Caco-2 (cell line): ENCODE measurements at regions of chr7 and their contacts with region 1.

Region 1: DNA sequence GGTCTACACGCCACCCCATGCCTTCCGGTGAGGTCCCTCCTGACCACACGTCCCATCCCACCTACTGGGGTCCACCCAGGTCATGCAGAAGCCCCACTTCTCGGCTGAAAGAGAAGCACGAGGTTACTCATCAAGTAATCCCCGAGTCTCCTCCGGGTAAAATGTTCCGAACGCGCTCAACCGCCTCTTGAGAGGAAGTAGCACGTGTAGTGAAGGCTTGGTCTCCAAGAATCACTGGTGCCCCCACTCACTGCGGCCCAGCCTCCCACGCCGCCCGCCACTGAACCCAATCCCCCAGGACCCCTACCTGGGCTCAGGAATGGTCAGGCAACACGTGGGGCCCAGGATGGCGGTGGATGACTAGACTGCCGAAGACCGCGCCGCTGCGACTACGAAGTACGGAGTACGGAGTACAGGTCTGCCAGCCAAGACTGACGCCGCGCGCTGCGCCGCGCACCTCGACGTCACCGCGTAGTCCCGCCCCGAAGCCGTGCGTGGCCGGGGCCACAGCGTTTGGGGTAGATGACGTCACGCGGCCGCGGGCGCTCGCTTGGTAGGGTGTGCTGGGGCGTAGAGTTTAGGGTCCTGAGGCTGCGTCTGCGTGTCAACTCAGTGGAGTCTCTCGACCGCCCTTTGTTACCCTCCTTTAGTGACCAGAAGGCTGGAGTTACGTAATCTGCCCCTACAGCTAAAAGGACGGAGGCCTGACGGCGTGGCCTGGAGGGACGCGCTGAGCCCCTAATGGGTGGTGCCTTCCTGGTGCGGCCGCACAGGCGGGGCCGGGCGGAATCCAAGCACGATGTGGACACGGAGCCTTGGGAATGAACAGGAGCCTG is 7.6 kb upstream of the MYO1G start:
- DNase-seq: peak; percentile 97
- H3K4me3 ChIP-seq: peak overlapping the region; percentile 80
- H3K4me3 Mint-ChIP-seq: peak overlapping the region; percentile 97
- H3K27ac Mint-ChIP-seq: peak overlapping the region; percentile 100
- H3K4me1 ChIP-seq: peaks cover 11% of the 10 kb centered on the region
- H3K4me1 Mint-ChIP-seq: peaks cover 17% of the 10 kb centered on the region
- H3K27me3 ChIP-seq: no peaks in the 10 kb centered on the region
- H3K27me3 Mint-ChIP-seq: no peaks in the 10 kb centered on the region
- CTCF ChIP-seq: no peak

Region 2: GRCh38 chr7:44581879-44582603 is 404.4 kb before region 1 on chr7 and contains the start of gene TMED4:
- CTCF ChIA-PET with region 1: no interaction called
- POLR2A ChIA-PET with region 1: no interaction called
- intact Hi-C with region 1: loop called (anchors 10 kb)
- DNase-seq: peak; percentile 99 to 100
- H3K4me3 ChIP-seq: peak within 1 kb of the TSS; percentile 80
- H3K4me3 Mint-ChIP-seq: peak within 1 kb of the TSS; percentile 86
- H3K27ac Mint-ChIP-seq: peak within 1 kb of the TSS; percentile 96
- H3K4me1 ChIP-seq: peaks cover 13% of the 10 kb centered on the region
- H3K4me1 Mint-ChIP-seq: peaks cover 7% of the 10 kb centered on the region
- H3K27me3 ChIP-seq: no peaks in the 10 kb centered on the region
- H3K27me3 Mint-ChIP-seq: no peaks in the 10 kb centered on the region
- CTCF ChIP-seq: no peak
- total RNA-seq, gene TMED4: 93.4 and 96.6 TPM in 2 replicates

Region 3: DNA sequence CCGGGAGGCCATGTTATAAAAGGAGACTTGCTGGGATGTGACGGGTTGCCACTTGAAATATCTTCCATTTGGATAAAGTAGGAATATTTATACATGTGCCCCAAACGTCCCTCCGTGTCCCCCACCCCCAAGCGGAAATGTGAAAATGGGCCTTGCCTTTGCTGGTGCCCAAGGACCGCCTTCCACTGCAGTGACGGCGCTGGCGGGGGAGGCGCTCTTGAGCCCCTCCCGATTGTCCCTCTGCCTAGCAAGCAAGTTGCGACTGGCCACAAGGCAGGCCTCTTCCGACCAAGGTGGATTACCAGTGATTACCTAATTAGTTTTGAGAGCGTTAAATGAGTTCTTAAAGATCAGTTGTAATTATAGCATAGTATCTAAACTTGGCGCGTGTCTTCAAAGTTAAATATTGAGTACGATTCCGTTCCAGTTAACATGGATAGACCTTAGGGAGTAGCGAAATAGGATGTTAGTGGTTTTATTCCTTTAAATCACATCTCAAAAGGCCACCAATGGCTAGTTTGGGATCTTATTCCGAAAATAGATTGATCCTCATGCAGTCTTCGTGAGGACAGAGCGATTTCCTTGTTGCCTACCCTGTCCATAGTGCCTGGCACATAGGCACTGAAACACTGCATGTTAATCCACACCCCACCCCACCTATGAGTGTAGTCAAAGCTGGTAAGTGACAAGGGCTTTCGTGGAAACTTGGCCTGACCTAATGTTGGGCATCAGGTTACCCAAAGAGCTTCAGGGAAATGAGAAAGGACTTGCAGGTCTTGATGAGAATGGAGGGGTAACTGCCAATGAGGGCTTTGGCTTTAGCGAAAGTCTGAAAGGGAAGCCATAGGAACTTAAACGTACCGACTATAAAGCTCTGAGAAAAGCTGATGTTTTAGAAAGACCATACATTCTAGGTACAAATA is 188.8 kb before region 1 on chr7:
- CTCF ChIA-PET with region 1: no interaction called
- POLR2A ChIA-PET with region 1: interaction called, 3 read pairs
- intact Hi-C with region 1: loop called (anchors 5 kb)
- DNase-seq: peak; percentile 90
- H3K4me3 ChIP-seq: peak overlapping the region; percentile 100
- H3K4me3 Mint-ChIP-seq: peak overlapping the region; percentile 97
- H3K27ac Mint-ChIP-seq: peak overlapping the region; percentile 99
- H3K4me1 ChIP-seq: 0 out of 2 replicates have a peak, but pooled peaks cover 10% of the 10 kb centered on the region
- H3K4me1 Mint-ChIP-seq: no peaks in the 10 kb centered on the region
- H3K27me3 ChIP-seq: no peaks in the 10 kb centered on the region
- H3K27me3 Mint-ChIP-seq: no peaks in the 10 kb centered on the region
- CTCF ChIP-seq: peak; percentile 67 to 71

Region 4: GRCh38 chr7:44885394-44886317 is 100.8 kb before region 1 on chr7 and contains the start of gene PURB:
- CTCF ChIA-PET with region 1: no interaction called
- POLR2A ChIA-PET with region 1: interaction called, 3 read pairs
- intact Hi-C with region 1: loop called (anchors 10 kb)
- DNase-seq: peak; percentile 92 to 95
- H3K4me3 ChIP-seq: peak within 1 kb of the TSS; percentile 78
- H3K4me3 Mint-ChIP-seq: peak within 1 kb of the TSS; percentile 96
- H3K27ac Mint-ChIP-seq: peak within 1 kb of the TSS; percentile 100
- H3K4me1 ChIP-seq: peaks cover 26% of the 10 kb centered on the region
- H3K4me1 Mint-ChIP-seq: peaks cover 17% of the 10 kb centered on the region
- H3K27me3 ChIP-seq: no peaks in the 10 kb centered on the region
- H3K27me3 Mint-ChIP-seq: no peaks in the 10 kb centered on the region
- CTCF ChIP-seq: no peak
- total RNA-seq, gene PURB: 25.1 and 26.3 TPM in 2 replicates

Region 5: DNA sequence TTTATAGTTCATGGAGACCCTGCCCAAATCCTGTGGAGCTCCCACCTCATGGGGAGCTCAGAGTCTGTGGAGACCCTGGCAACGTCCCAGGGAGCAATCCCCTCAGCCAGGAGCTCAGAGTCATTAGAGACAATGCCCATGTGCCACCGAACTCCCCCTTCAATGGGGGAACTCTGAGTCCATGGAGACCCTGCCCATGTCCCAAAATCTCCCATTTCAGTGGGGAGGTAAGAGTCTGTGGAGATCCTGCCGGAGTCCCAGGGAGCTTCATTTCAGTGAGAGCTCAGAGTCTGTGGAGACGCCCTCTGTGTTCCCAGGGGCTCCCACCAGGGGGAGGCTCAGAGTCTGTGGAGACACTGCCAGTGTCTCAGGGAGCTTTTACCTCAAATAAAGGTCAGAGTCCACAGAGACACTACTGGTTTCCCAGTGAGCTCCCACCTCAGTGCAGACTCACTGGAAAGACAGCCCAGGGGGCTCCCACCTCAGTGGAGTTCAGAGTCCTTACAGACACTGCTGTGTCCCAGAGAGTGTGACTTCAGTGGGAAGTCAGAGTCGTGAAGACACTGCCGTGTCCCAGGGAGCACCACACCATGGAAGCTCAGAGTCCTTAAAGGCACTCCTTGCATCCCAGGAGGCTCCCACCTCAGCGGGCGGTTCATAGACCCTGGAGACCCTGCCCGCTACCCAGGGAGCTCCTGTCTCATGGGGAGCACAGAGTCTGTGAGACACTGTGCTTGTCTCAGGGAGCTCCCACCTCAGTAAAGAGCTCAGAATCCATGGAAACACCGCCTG is 12.6 kb before region 1 on chr7:
- CTCF ChIA-PET with region 1: no interaction called
- POLR2A ChIA-PET with region 1: interaction called, 14 read pairs
- intact Hi-C with region 1: no loop called
- DNase-seq: peak; percentile 53 to 59
- H3K4me3 ChIP-seq: no peak overlapping the region
- H3K4me3 Mint-ChIP-seq: no peak overlapping the region
- H3K27ac Mint-ChIP-seq: no peak overlapping the region
- H3K4me1 ChIP-seq: peaks cover 9% of the 10 kb centered on the region; the same call in 1 of the 2 replicates
- H3K4me1 Mint-ChIP-seq: no peaks in the 10 kb centered on the region
- H3K27me3 ChIP-seq: no peaks in the 10 kb centered on the region
- H3K27me3 Mint-ChIP-seq: no peaks in the 10 kb centered on the region
- CTCF ChIP-seq: peak; percentile 44 to 63

Region 6: DNA sequence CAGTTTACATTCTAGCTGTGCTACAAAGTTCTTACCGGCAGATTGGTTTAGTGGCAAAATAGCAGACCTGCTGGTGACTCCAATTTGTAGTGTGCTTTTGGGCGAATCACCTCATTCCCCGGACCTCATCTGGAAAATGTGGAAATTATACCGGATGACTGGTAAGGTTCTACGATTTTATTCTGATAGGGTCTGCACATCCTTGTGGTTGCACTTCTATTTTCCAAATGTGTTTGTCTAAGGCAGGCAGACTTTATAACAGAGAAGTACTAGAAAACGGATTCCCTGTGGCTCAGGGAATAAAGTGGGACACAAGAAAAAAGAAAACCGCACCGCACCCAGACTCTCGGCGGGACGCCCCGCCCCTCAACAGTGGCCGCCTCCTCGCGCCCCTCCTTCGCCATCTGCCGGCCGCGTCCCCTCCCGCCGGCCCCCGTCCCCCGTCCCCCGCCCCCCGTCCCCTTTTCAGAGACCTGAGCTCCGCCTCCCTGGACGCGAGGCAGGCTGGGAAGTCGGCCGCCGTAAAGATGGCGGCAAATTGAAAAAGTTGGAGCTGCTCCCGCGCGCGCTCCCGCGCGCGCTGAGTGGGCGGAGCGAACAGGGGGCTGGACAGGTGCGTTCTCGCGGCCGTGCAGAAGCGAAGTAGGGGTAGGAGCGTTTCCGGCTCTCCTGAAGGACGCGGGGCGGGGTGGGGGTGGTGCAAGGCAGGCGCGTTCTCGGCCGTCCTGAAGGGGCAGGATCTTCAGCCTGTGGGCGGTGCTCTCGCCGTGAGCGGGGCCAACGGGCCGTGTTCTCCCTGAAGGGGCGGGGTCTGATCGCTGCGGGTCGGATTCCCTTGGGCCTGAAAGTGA is 13.0 kb after region 1 on chr7:
- CTCF ChIA-PET with region 1: interaction called, 14 read pairs
- POLR2A ChIA-PET with region 1: interaction called, 73 read pairs
- intact Hi-C with region 1: loop called (anchors 1 kb)
- DNase-seq: peak; percentile 100
- H3K4me3 ChIP-seq: peak overlapping the region; percentile 73
- H3K4me3 Mint-ChIP-seq: peak overlapping the region; percentile 79
- H3K27ac Mint-ChIP-seq: peak overlapping the region; percentile 95
- H3K4me1 ChIP-seq: peaks cover 15% of the 10 kb centered on the region
- H3K4me1 Mint-ChIP-seq: peaks cover 16% of the 10 kb centered on the region
- H3K27me3 ChIP-seq: no peaks in the 10 kb centered on the region
- H3K27me3 Mint-ChIP-seq: no peaks in the 10 kb centered on the region
- CTCF ChIP-seq: peak in 1 of 2 experiments; percentile 16

Region 7: DNA sequence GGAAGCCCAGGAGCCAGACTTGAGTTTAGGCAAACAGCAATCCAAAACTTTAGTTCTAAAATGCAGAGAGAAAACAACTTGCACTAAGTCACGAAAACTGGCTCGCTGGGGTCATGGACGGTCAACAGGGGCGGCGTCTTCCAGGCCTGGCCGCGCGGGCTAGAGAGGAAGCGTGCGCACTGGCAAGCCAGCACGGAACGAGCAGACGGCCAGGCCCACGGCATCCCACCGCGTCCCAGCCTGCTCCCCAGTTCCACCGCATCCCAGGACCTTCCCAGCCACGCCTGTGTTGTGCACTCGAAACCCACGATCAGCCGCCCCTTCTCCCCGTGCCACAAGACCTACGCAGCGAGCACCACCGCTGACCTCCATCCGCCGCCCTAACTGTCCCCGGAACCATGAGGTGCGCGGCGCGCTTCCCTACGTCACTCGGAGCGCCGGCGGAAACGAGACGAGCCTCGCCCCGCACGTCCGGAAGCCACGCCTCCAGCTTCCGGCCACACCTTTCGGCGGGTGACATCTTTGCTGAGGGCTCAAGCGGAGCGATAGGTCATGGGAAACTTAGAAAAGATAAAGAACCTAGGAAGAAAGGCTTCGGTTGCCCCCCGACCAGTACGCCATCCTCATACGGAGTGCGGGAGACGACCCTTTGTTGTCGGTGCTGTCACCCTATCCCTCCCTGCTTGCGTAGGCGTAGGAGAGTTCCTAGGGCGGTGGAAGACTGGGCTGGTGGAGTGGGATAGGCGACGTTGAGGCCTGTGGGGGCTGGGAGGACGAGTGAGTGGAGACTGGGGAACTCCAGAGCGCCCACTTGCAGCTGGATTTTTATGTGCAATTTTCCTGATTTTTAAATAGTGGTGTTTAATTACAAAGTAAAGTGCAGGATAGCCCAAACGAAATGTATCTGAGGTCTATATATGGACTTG is 125.1 kb after region 1 on chr7 and contains the start of gene TBRG4:
- CTCF ChIA-PET with region 1: interaction called, 4 read pairs
- POLR2A ChIA-PET with region 1: interaction called, 6 read pairs
- intact Hi-C with region 1: loop called (anchors 5 kb)
- DNase-seq: peak; percentile 94 to 95
- H3K4me3 ChIP-seq: peak within 1 kb of the TSS; percentile 99
- H3K4me3 Mint-ChIP-seq: peak within 1 kb of the TSS; percentile 95
- H3K27ac Mint-ChIP-seq: peak within 1 kb of the TSS; percentile 99
- H3K4me1 ChIP-seq: peaks cover 4% of the 10 kb centered on the region; the same call in 1 of the 2 replicates
- H3K4me1 Mint-ChIP-seq: peaks cover 6% of the 10 kb centered on the region
- H3K27me3 ChIP-seq: no peaks in the 10 kb centered on the region
- H3K27me3 Mint-ChIP-seq: no peaks in the 10 kb centered on the region
- CTCF ChIP-seq: peak; percentile 40 to 52
- total RNA-seq, gene TBRG4: 116 and 126 TPM in 2 replicates